Common myeloid progenitor, CD34-positive (primary cell): ENCODE measurements at regions of chr12 and their contacts with region 1.

Region 1: DNA sequence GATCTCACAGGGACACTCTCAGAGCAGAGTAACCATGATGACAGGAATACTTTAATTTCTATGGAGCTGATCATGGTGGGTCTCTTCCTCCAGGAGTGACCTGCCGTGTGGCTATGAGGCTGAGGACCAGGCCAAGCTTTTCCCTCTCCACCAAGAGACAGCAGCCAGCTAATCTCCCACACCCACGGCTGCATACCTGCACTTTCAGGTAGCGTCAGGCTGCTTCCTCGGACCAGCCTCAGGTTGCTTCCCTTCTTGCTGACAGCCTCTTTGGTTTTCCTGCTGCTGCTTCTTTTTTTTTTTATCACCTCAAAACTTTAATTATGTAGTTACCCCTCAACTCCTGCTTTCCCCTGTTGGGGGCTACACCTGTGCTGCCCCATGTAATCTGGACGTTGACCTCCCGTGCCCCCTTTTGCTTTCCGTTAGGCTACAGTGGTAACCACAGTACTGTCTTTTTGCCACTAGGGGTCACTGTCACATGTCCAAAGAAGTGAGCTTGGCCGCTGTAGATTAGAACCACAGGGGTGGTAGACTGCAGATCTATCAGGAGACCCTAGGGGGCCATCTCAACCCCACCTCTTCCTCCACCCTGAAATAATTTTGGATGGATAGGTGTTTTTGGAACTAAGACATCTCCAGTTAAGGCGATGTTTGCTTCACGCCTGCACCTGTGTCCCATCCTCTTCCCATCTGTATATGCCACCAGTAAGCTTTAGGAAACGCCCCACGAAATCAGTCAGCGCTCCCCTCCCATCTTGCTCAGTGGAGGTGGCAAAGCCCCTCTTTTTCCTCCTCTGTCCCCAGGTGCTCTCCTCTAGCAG is 7.8 kb upstream of the PIP4K2C start:
- DNase-seq: peak; percentile 88 to 93 (median 91)
- H3K4me3 ChIP-seq: no peak overlapping the region
- H3K27ac ChIP-seq: no peak overlapping the region
- H3K4me1 ChIP-seq: no peaks in the 10 kb centered on the region
- H3K27me3 ChIP-seq: peaks cover 0 to 25% (median 5%) of the 10 kb centered on the region in 5 experiments

Region 2: GRCh38 chr12:57541001-57541400 is 42.2 kb before region 1 on chr12:
- CTCF ChIA-PET with region 1: interaction called, 14 read pairs
- POLR2A ChIA-PET with region 1: no interaction called
- DNase-seq: no peak
- H3K4me3 ChIP-seq: no peak overlapping the region
- H3K27ac ChIP-seq: no peak overlapping the region
- H3K4me1 ChIP-seq: peaks cover 0 to 27% (median 13%) of the 10 kb centered on the region in 4 experiments
- H3K27me3 ChIP-seq: no peaks in the 10 kb centered on the region

Region 3: DNA sequence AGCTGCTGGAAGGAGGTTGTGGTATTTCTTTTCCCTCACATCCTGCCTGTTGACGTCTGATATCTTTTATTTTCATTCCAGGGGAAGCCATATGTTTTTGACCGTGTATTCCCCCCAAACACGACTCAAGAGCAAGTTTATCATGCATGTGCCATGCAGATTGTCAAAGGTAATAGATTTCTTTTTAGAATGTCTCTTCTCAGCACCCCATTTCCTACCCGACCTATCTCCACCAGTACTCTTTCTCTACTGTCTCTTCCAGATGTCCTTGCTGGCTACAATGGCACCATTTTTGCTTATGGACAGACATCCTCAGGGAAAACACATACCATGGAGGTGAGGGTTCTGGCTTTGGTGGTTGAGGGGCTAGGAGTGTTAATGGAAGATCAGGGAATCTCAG is 19.9 kb before region 1 on chr12:
- CTCF ChIA-PET with region 1: interaction called, 15 read pairs
- POLR2A ChIA-PET with region 1: no interaction called
- DNase-seq: peak in 2 of 3 donors; percentile 45 to 66
- H3K4me3 ChIP-seq: no peak overlapping the region
- H3K27ac ChIP-seq: no peak overlapping the region
- H3K4me1 ChIP-seq: peaks cover 0 to 7% (median 2%) of the 10 kb centered on the region in 4 experiments
- H3K27me3 ChIP-seq: peaks cover 0 to 6% (median 0%) of the 10 kb centered on the region in 5 experiments

Region 4: DNA sequence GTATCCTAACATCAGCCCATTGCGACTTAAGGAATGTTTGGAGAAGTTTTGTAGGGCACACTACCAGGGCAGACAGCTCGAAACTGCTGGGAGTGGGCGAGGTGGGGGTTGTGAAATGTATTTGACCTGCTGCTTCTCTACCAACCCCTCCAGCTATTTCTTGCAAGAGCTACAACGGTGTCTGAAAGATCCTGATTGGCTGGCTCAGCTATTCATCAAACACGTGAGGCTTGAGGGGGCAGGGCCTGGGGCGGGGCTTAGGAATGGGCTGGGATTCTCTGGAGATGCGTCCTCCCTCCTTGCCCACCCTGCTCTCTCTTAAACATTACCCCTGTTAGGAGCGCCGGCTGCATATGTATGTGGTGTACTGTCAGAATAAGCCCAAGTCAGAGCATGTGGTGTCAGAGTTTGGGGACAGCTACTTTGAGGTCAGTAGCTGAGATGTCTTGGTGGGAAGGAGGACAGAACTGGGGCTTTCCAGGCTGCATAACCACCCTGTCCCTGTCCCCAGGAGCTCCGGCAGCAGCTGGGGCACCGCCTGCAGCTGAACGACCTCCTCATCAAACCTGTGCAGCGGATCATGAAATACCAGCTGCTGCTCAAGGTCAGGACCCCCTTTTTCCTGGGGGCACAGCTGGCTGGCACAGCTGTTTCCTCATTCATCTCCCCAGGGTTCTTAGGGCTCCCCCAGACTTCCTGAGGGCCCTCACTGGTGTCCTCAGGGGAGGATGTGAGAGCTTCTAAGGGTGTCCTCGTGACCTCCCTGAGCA is 31.1 kb after region 1 on chr12:
- CTCF ChIA-PET with region 1: interaction called, 121 read pairs
- POLR2A ChIA-PET with region 1: no interaction called
- DNase-seq: peak; percentile 29 to 58 (median 58)
- H3K4me3 ChIP-seq: no peak overlapping the region
- H3K27ac ChIP-seq: no peak overlapping the region
- H3K4me1 ChIP-seq: peaks cover 0 to 22% (median 11%) of the 10 kb centered on the region in 4 experiments
- H3K27me3 ChIP-seq: peaks cover 0 to 74% (median 51%) of the 10 kb centered on the region in 5 experiments

Region 5: DNA sequence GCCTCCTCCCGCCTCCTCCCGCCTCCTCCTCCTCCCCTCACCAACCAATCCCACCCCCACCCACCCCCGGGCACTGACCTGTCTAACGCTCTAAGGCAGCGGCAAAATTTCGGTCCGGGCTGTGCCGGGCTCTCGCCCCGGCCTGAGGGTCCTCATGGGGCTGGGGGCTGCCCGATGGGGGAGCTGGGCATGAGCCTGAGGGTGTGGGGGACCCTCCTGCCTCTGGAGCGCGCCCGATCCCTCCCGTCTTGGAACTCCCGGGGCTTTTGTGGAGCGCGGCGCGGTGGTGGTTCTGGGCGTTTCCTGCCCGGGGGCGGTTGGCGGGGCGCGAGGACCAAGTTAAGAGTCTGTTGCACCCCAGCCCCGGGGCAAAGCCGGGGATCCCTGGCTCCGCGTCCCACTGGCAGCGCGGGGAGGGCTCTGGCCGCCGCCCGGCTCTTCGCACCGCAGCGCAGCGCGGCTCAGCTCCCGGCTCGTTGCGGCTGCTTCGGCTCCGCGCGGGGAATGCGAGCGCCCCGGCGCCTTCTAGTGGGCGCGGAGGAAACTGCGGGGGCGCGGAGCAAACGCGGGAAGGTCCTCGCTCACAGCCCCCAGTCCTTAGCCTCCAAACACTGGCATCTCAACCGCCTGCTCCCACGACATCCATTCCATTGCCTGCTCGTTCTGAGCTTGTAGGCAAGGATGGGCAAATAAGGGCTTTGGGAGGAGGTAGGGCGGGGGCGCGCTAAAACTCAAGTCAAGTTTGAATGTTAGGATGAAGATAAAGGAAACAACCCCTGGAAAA is 49.7 kb after region 1 on chr12 and contains the start of gene B4GALNT1:
- CTCF ChIA-PET with region 1: interaction called, 25 read pairs
- POLR2A ChIA-PET with region 1: interaction called, 3 read pairs
- DNase-seq: peak; percentile 59 to 72 (median 70)
- H3K4me3 ChIP-seq: peak within 1 kb of the TSS in 6 of 7 experiments; percentile 31 to 73 (median 53)
- H3K27ac ChIP-seq: no peak within 1 kb of the TSS
- H3K4me1 ChIP-seq: peaks cover 0 to 25% (median 20%) of the 10 kb centered on the region in 4 experiments
- H3K27me3 ChIP-seq: peaks cover 0 to 60% (median 36%) of the 10 kb centered on the region in 5 experiments